ENCODE measurements at regions of chr7 and their contacts with region 1.

Region 1: GRCh38 chr7:139075031-139075652 is 34.4 kb downstream of the ZC3HAV1 start:
- DNase-seq: peak; percentile 63 to 80 (median 76)
- ATAC-seq: peak; percentile 89 to 93
- H3K4me3 ChIP-seq: no peak overlapping the region
- H3K27ac ChIP-seq: peak overlapping the region; percentile 81
- H3K4me1 ChIP-seq: no peaks in the 10 kb centered on the region
- H3K27me3 ChIP-seq: no peaks in the 10 kb centered on the region

Region 2: DNA sequence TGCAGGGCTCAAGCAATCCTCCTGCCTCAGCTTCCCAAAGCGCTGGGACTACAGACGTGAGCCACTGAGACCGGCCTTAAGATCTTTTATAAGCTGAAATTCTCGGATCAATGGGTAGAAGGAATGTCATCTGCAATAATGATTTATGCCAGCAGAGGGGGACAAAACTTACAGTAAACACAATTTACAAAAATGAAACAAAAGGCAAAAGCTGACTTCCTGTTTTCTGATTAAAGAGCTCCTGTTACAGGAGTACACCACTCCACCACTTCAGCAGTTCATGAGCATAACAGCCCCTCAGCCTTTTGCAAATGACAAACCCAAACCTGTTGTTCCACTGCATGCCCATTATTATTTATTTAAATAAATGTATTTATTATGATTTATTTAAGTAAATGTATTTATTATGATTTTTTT is 188.6 kb before region 1 on chr7:
- intact Hi-C with region 1: loop called in 2 of 4 experiments (anchors 10 kb)
- DNase-seq: no peak
- ATAC-seq: no peak
- H3K4me3 ChIP-seq: no peak overlapping the region
- H3K27ac ChIP-seq: no peak overlapping the region
- H3K4me1 ChIP-seq: peaks cover 2% of the 10 kb centered on the region
- H3K27me3 ChIP-seq: no peaks in the 10 kb centered on the region

Region 3: GRCh38 chr7:139016931-139017511 is 58.1 kb before region 1 on chr7:
- intact Hi-C with region 1: loop called in 3 of 4 experiments (anchors 5 to 10 kb)
- DNase-seq: peak; percentile 57 to 73 (median 71)
- ATAC-seq: peak; percentile 77 to 89
- H3K4me3 ChIP-seq: no peak overlapping the region
- H3K27ac ChIP-seq: no peak overlapping the region
- H3K4me1 ChIP-seq: no peaks in the 10 kb centered on the region
- H3K27me3 ChIP-seq: no peaks in the 10 kb centered on the region

Measured in right cardiac atrium (tissue), 5 donors.